ENCODE measurements at regions of chr17 and their contacts with region 1.

Region 1: DNA sequence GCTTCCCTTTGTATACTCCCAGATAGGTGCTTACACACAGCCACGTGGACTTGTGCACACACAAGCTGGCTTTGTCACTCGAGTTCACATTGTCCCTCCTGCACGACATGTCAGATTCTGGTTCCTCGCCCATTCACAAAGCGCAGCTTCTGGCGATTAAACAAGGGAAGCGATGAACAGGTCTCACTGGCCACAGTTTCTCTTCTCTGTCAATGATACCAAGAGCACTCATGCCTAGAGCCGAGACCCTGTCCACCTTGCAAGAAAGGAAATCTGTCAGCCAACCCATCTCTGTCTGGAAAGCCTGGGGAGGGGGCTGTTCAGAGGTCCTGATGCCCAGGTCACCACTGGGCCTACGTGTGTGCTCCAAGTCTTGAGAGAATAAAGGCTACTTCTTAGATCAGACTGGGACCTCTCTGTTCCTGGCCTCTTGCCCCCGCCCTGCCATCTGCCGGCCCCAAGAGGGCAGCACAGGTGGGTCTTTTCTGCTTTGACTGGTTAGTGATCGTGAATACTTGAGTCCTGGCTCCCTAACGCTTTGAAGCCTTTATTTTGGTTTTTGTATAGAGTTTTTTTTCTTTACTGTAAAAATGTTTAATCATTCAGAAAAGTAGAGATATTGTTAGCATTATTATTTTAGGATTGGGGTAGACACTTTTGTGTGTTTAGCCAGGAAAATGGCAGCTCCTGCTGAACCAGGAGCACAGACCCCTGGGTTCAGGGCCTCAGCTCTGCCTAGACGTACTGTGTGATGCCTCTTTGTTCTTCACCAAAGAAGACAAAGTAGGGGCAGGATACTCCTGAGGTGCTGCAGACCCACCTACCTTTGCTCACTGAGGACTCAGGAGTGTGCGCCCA is 104.7 kb downstream of the MRM1 start:
- DNase-seq: peak; percentile 53 to 73 (median 65)
- ATAC-seq: peak; percentile 95
- H3K4me3 ChIP-seq: no peak overlapping the region
- H3K27ac ChIP-seq: no peak overlapping the region
- H3K4me1 ChIP-seq: peaks cover 3 to 16% of the 10 kb centered on the region in 2 experiments; a peak in 3 of 5 replicates
- H3K27me3 ChIP-seq: peaks cover 2 to 21% of the 10 kb centered on the region in 2 experiments; a peak in 3 of 5 replicates
- CTCF ChIP-seq: peak; percentile 80 to 83 (median 81)
- EP300 ChIP-seq: no peak
- POLR2A ChIP-seq: no peak
- RAD21 ChIP-seq: peak; percentile 62 to 87

Region 2: DNA sequence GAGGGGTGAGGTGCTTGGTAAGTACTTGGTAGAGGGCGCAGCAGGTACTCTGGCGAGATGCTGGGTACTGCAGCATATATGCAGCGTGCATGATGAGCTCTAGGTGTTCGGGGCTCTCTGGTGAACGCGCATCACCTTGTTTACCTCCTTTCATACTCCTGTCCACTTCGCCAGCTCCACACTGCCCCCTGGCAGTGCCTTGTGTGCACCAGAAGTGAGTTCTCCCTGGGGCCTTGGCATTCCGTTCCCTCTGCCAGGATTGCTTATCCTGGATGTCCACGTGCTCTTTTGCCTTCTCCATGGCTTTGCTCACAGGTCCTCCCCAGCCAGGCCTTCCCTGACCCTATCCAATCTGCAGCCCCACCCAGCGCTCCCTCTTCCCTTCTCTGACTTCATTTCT is 49.5 kb after region 1 on chr17:
- CTCF ChIA-PET with region 1: interaction called, 3 read pairs
- POLR2A ChIA-PET with region 1: no interaction called
- in situ Hi-C with region 1: no loop called
- intact Hi-C with region 1: loop called (anchors 2 kb)
- DNase-seq: peak; percentile 55 to 70 (median 62)
- ATAC-seq: peak; percentile 91
- H3K4me3 ChIP-seq: no peak overlapping the region
- H3K27ac ChIP-seq: no peak overlapping the region
- H3K4me1 ChIP-seq: no peaks in the 10 kb centered on the region; a peak in 1 of 5 replicates
- H3K27me3 ChIP-seq: peaks cover 13 to 25% of the 10 kb centered on the region in 2 experiments
- CTCF ChIP-seq: peak; percentile 74 to 77 (median 75)
- EP300 ChIP-seq: no peak
- POLR2A ChIP-seq: no peak
- RAD21 ChIP-seq: peak; percentile 47 to 87

Measured in K562 (cell line).